ENCODE measurements at regions of chr2 and their contacts with region 1.

Region 1: DNA sequence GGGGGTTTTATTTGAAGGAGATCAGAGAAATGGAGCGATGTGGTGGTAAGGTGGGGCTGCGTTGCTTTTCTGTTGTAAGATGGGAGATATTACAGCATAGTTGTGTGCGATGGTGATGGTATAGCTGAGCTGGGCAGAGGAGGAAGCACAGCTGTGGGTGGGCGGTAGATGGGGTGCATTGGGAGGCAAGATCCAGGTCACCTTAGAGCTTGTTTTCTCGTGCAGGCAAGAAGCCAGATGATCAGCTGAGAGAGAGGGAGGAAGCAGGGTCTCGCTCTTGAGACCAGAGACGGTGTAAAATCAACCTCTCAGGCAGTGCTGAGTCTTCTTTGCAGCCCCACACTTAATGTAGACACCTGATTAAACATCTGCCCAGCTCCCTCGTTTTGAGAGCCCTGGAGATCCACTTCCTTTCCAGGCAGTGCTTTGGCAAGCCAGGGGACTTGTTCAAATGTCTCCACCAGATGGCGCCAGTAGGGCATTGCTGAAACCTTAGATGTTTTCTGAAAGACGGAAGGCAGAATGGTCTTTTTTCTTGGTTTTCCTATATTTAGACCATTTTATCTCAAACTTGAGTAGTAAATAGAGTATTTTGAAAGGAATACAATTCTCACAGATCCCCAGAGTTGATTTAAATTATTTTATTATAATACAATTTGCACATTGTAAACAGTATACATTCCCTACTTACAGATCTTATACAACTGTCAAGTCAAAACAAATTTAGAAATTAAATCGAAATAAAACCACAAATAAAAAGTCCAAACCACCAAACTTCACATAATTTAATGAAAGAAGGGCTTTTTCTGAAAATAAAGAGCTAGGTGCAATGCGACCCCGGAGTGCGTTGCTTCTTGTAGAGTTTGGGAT is 21.1 kb upstream of the LYPD6B start:
- DNase-seq: peak; percentile 77
- CTCF ChIP-seq: peak; percentile 84

Region 2: DNA sequence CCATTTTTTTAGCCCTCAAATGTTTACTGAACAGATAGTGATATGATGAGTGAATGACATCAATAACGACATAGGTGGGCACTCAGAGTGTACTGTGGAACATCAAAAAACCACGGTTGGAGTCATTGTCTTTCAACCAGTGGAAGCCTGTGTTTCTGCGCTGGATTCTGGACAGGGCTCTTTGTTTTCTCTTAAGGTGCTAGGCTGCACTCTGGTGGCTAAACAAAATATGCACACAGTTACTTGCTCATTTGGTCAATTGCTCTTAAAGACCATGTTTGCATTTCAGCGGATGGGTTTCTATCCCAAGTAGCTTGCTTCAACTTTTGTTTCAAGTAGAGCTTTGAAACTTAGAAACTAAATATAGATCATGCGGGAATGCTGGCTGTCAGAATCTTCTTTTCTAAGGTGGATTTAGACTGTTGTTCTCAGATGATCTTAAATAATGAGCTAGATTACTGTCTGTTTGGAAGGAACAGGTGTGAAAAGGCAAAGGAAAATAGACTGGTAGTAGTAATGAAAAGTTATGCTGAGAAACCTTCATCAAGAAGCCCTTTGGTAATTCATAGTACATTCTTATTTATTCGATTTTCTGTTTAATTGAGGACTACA is 27.4 kb before region 1 on chr2:
- CTCF ChIA-PET with region 1: interaction called, 18 read pairs
- POLR2A ChIA-PET with region 1: no interaction called
- DNase-seq: peak; percentile 62
- CTCF ChIP-seq: peak; percentile 70

Region 3: GRCh38 chr2:149006883-149007540 is 10.3 kb before region 1 on chr2:
- CTCF ChIA-PET with region 1: interaction called, 40 read pairs
- POLR2A ChIA-PET with region 1: no interaction called
- DNase-seq: no peak
- CTCF ChIP-seq: no peak

Region 4: GRCh38 chr2:149050188-149050587 is 32.8 kb after region 1 on chr2:
- CTCF ChIA-PET with region 1: interaction called, 25 read pairs
- POLR2A ChIA-PET with region 1: no interaction called
- DNase-seq: no peak
- CTCF ChIP-seq: no peak

Region 5: GRCh38 chr2:149129433-149129832 is 112.1 kb after region 1 on chr2:
- CTCF ChIA-PET with region 1: no interaction called
- POLR2A ChIA-PET with region 1: no interaction called
- DNase-seq: no peak
- CTCF ChIP-seq: no peak

Region 6: DNA sequence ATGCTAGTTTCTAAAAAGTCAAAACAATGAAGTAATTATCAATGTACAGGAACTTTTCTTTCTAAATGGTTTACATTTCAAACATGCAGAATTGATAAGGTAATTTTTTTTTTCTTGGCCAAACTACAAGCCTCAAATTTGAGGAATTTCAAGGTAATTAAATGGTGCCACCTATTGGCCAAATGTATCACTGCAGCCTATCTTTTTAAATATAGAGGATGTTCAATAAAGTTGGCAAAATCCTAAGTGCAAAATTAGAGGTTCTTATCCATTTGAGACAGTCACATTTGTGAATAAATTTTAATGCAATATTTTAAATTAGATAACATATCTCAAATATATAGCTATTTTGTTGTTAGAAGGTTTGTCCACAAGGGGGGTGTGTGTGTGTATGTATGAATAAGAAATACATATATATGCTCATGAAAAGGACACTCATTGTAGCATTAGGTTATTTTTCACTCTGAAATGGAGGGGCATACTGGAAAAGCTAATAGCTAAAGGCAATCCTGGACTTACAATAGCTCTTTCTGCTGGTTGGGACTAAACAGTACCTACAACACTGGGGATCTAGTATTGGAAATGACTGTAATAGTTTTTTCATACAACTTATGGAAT is 544.1 kb after region 1 on chr2:
- CTCF ChIA-PET with region 1: interaction called, 125 read pairs
- POLR2A ChIA-PET with region 1: no interaction called
- DNase-seq: peak; percentile 22
- CTCF ChIP-seq: peak; percentile 72

Measured in GM10248 (cell line).